Dendritic cell treated with granulocyte-macrophage colony-stimulating factor and Interleukin-4, amounts not matched to agents 40 ng/mL and 50 ng/mL, for 4 days (primary cell): ENCODE measurements at regions of chr6 and their contacts with region 1.

Region 1: GRCh38 chr6:100099189-100100074 is 105.4 kb upstream of the MCHR2 start:
- H3K4me3 Mint-ChIP-seq: no peak overlapping the region
- H3K27ac Mint-ChIP-seq: no peak overlapping the region
- H3K4me1 Mint-ChIP-seq: no peaks in the 10 kb centered on the region
- H3K27me3 Mint-ChIP-seq: no peaks in the 10 kb centered on the region

Region 2: DNA sequence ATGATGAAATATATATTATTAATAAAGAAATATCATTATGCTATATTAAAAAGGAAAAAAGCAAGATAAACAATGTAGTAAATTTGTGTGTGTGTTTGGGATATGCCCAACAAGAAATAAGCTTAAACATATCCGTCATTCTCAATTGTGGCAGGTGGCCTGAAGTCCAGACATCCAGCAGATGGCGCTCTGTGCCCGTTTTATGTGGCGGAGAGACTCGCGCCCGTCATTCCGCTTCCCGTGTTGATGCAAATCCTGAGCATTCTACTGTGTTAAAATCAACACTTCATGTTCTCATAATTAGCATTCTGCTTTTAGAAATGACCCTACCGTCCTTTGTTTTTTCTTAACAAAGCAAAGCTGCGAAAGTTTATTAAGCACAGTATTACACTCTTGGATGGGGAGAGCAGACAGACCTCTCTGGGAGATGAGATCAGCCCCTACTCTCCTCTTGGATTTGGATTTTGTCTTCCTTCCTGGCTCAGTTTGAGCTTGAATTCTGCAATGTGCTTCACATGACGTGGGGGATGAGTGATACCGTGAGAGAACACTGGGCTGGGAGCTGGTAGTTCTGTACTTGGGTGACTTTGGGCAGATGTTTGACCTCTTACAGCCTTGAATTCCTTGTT is 231.2 kb before region 1 on chr6:
- intact Hi-C with region 1: loop called (anchors 5 kb)
- H3K4me3 Mint-ChIP-seq: no peak overlapping the region
- H3K27ac Mint-ChIP-seq: no peak overlapping the region
- H3K4me1 Mint-ChIP-seq: no peaks in the 10 kb centered on the region
- H3K27me3 Mint-ChIP-seq: peaks cover 22% of the 10 kb centered on the region

Region 3: DNA sequence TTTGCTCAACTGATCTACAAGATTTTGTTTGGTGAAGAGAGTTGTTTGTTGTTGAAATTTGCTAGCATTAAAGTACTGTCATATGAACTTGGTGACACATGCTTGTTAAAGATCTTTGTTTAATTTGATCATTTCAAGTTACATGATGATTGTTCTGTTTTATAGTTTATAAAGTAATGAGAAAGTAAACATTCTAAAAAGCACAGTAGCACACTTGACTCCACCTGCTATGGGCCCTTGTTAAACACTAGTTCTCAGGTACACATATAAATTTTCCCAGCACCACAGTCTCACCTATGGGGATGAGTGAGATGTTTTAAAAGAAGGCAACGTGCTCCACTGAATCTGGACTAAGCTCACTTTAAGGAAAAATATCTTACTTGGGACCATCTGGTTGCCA is 119.5 kb before region 1 on chr6:
- intact Hi-C with region 1: no loop called
- H3K4me3 Mint-ChIP-seq: no peak overlapping the region
- H3K27ac Mint-ChIP-seq: no peak overlapping the region
- H3K4me1 Mint-ChIP-seq: no peaks in the 10 kb centered on the region
- H3K27me3 Mint-ChIP-seq: no peaks in the 10 kb centered on the region

Region 4: DNA sequence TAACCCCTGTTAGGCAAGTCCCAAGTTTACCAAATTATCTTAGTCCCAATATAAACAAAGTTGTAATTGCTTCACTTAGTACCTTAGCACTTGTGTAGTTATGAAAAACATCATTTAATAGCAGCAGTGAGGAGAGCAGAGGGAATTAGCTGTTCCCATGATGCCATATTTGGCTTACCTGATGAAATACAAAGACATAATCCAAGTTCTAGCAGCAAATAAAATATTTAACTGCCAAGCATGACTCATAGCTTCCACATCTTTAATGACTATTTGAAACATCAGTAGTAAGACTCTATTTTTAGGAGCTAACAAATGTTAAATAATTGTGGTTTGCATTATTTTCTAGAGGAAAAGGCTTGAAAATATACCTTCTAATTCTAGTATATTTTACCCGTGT is 11.4 kb before region 1 on chr6:
- intact Hi-C with region 1: no loop called
- H3K4me3 Mint-ChIP-seq: no peak overlapping the region
- H3K27ac Mint-ChIP-seq: no peak overlapping the region
- H3K4me1 Mint-ChIP-seq: no peaks in the 10 kb centered on the region
- H3K27me3 Mint-ChIP-seq: no peaks in the 10 kb centered on the region